Endothelial cell of umbilical vein (primary cell): ENCODE measurements at regions of chrX and their contacts with region 1.

Region 1: DNA sequence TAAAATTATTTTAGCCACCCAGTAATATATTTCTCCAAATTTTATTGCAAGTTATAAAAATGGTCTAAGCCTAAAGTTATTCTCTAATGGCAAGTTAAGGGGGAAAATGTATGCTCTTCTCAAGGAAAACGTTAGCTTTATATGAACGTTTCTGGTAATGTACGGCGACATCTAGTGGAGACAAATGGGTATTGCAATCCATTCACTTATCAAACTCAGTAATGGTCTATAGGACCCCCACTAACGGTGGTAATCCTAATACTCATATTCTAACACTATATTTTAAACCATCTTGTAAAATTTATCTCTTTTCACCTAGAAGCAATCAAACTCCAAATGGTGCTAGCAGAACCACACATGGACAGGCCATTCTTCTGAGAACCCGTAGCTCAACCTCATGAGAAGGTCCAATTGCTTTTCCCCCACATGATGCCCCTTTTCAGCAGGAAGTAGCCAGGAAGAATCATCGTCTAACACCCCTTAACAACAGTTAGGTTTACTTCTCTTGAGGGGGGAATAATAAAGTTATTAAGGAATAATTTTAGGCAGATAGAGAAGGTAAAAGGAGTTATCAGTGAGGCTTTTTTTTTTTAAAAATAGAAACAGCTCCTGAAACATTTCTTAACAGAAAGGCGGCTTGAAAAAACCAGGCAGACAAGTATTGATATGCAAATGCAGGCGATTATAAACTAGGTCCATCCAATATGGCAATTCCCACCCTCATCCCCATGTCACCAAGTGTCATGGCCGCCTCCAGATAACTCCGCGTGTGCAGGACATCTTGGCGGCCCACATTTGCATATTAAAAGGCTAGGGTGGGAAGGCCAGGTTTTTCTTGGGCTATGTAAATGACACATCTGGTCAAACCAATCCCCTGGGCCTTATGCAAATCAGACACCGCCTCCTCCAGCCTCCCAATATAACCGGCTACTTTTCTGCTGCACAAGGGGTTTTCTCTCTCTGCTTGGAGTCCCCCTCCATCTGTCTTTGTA is 35.0 kb downstream of the NUDT11 start:
- DNase-seq: peak; percentile 34
- H3K4me3 ChIP-seq: no peak overlapping the region
- H3K27ac ChIP-seq: no peak overlapping the region
- H3K4me1 ChIP-seq: no peaks in the 10 kb centered on the region
- H3K27me3 ChIP-seq: no peaks in the 10 kb centered on the region
- CTCF ChIP-seq: peak; percentile 17 to 61
- POLR2A ChIP-seq: no peak

Region 2: GRCh38 chrX:50430917-50431575 is 1030.3 kb before region 1 on chrX:
- CTCF ChIA-PET with region 1: no interaction called
- POLR2A ChIA-PET with region 1: no interaction called
- dilution Hi-C with region 1: no loop called
- intact Hi-C with region 1: no loop called
- DNase-seq: no peak
- H3K4me3 ChIP-seq: no peak overlapping the region
- H3K27ac ChIP-seq: no peak overlapping the region
- H3K4me1 ChIP-seq: no peaks in the 10 kb centered on the region
- H3K27me3 ChIP-seq: no peaks in the 10 kb centered on the region
- CTCF ChIP-seq: no peak
- POLR2A ChIP-seq: no peak

Region 3: DNA sequence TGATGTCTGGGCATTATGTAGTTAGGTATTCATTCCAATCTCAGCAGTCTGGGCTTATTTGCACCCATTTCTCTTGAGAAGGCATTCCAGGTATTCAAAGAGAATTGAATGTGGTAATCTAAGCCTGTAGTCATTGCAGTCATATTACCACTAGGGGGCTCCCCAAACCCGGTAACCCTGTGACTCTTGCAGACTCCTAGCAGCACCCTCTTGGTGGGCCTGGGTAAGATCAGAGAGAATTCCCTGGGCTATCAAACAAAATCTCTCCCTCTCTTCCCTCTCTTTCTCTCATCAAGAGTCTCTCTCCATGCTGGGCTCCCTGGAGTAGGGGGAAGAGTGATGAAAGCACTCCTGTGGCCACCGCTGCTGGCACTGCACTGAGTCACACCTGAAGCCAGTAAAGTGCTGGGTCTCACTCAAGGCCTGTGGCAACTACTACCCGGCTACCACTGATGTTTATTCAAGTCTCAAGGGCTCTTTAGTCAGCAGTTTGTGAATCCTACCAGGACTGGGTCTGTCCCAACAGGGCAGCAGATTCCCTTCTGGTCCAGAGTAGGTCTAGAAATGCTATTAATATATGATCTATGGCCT is 316.4 kb before region 1 on chrX:
- CTCF ChIA-PET with region 1: interaction called, 4 read pairs
- POLR2A ChIA-PET with region 1: no interaction called
- dilution Hi-C with region 1: no loop called
- intact Hi-C with region 1: loop called (anchors 5 kb)
- DNase-seq: peak; percentile 13
- H3K4me3 ChIP-seq: no peak overlapping the region
- H3K27ac ChIP-seq: no peak overlapping the region
- H3K4me1 ChIP-seq: no peaks in the 10 kb centered on the region
- H3K27me3 ChIP-seq: no peaks in the 10 kb centered on the region
- CTCF ChIP-seq: peak; percentile 36 to 54
- POLR2A ChIP-seq: no peak

Region 4: DNA sequence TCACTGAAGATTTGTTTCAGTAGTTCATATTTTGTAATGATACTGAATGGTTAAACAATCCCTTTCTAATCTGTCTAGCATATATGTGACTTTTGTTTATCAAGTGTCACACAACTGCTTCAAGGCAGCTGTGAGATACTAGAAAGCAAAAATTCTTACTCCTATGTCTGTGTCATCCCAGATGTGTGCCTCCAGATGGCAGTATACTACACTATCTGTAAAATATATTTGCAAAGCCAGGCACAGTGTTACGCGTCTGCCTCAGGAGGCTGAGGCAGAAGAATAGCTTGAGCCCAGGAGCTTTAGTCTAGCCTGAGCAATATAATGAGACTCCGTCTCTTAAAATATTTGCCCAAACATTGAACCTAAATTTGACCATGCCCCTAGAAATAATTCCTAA is 124.8 kb before region 1 on chrX:
- CTCF ChIA-PET with region 1: interaction called, 14 read pairs
- POLR2A ChIA-PET with region 1: no interaction called
- dilution Hi-C with region 1: no loop called
- intact Hi-C with region 1: no loop called
- DNase-seq: peak; percentile 18
- H3K4me3 ChIP-seq: no peak overlapping the region
- H3K27ac ChIP-seq: no peak overlapping the region
- H3K4me1 ChIP-seq: no peaks in the 10 kb centered on the region
- H3K27me3 ChIP-seq: peaks cover 2 to 4% of the 10 kb centered on the region in 2 experiments
- CTCF ChIP-seq: peak; percentile 10 to 30
- POLR2A ChIP-seq: no peak

Region 5: DNA sequence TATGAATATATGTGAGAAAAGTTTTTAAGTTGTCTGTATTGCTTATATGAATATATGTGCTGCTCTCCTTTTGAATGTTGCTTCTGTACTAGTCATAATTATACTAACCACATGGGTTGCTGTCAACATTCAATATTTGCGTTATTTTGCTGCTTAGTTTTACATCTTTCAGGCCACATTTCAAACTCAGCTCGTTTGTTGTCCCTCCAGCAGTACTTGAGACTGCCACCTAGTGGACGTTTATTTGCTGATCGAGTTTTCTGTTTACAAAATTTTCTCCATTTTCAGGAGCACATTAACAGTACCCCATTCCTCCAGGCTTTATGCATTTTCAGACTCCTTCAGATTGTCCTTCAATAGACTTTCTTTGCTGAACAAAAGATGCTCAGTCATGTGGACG is 40.7 kb before region 1 on chrX:
- CTCF ChIA-PET with region 1: interaction called, 13 read pairs
- POLR2A ChIA-PET with region 1: no interaction called
- dilution Hi-C with region 1: no loop called
- intact Hi-C with region 1: no loop called
- DNase-seq: peak; percentile 13
- H3K4me3 ChIP-seq: no peak overlapping the region
- H3K27ac ChIP-seq: no peak overlapping the region
- H3K4me1 ChIP-seq: no peaks in the 10 kb centered on the region
- H3K27me3 ChIP-seq: no peaks in the 10 kb centered on the region
- CTCF ChIP-seq: peak; percentile 25 to 51
- POLR2A ChIP-seq: no peak

Region 6: GRCh38 chrX:51476930-51477329 is 15.6 kb after region 1 on chrX:
- CTCF ChIA-PET with region 1: interaction called, 28 read pairs
- POLR2A ChIA-PET with region 1: no interaction called
- dilution Hi-C with region 1: no loop called
- intact Hi-C with region 1: no loop called
- DNase-seq: no peak
- H3K4me3 ChIP-seq: no peak overlapping the region
- H3K27ac ChIP-seq: no peak overlapping the region
- H3K4me1 ChIP-seq: no peaks in the 10 kb centered on the region
- H3K27me3 ChIP-seq: no peaks in the 10 kb centered on the region
- CTCF ChIP-seq: no peak
- POLR2A ChIP-seq: no peak

Region 7: DNA sequence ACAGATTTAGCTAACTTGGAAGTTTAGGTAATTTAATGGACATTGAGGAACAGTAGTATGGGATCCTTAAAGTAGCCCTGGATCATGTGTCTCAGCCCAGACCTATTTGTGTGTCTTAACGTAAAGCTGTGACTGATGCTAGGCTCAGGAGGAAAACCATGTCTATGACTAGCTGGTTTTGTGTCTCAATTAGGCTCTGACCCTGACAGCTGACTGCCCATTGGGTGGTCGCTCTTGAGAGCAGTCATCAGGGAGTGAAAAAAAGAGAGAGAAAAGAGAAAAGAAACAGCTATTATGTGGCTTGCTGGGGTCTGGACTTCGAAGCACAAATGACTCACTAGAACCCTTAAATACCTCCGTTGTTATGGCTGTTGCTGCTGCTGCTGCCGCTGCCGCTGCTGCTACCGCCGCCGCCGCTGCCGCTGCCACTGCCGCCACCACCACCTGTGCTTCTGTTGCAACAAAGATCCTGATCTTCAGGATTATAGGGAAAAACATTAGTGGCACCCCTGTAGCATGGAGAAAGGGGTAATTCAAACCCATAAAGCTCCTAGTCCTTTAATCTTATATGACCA is 352.6 kb after region 1 on chrX:
- CTCF ChIA-PET with region 1: no interaction called
- POLR2A ChIA-PET with region 1: no interaction called
- dilution Hi-C with region 1: no loop called
- intact Hi-C with region 1: no loop called
- DNase-seq: no peak
- H3K4me3 ChIP-seq: no peak overlapping the region
- H3K27ac ChIP-seq: no peak overlapping the region
- H3K4me1 ChIP-seq: no peaks in the 10 kb centered on the region
- H3K27me3 ChIP-seq: no peaks in the 10 kb centered on the region
- CTCF ChIP-seq: no peak
- POLR2A ChIP-seq: no peak